Activated CD4-positive, alpha-beta memory T cell treated with anti-CD3 and anti-CD28 coated beads for 36 hours (primary cell): ENCODE measurements at regions of chr6 and their contacts with region 1.

Region 1: DNA sequence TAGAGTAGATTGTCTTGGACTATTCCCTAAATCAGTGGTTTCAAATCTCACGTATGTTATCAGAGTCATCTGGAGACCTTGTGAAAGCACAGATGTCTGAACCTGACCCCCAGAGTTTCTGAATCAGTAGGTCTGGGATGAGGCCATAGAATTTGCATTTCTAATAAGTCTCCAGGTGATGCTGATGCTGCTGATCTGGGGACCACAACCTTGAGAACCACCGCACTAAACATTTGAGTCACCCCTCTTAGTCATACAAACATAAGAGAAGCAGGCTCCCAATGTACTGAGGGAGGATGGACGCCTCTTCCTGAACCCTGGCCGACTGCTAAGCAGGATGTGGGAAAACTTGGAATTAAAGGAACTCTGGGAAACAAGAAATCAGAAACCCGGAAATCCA is 187.8 kb upstream of the PRDM1 start:
- DNase-seq: peak; percentile 67
- H3K4me3 Mint-ChIP-seq: no peak overlapping the region
- H3K27ac Mint-ChIP-seq: no peak overlapping the region
- H3K4me1 Mint-ChIP-seq: peaks cover 14% of the 10 kb centered on the region
- H3K27me3 Mint-ChIP-seq: peaks cover 9% of the 10 kb centered on the region

Region 2: GRCh38 chr6:105484238-105485161 is 413.8 kb before region 1 on chr6:
- CTCF ChIA-PET with region 1: interaction called, 3 read pairs
- POLR2A ChIA-PET with region 1: no interaction called
- intact Hi-C with region 1: loop called (anchors 10 kb)
- DNase-seq: no peak
- H3K4me3 Mint-ChIP-seq: peak overlapping the region; percentile 2
- H3K27ac Mint-ChIP-seq: peak overlapping the region; percentile 30
- H3K4me1 Mint-ChIP-seq: peaks cover 32% of the 10 kb centered on the region
- H3K27me3 Mint-ChIP-seq: peaks cover 7% of the 10 kb centered on the region

Region 3: DNA sequence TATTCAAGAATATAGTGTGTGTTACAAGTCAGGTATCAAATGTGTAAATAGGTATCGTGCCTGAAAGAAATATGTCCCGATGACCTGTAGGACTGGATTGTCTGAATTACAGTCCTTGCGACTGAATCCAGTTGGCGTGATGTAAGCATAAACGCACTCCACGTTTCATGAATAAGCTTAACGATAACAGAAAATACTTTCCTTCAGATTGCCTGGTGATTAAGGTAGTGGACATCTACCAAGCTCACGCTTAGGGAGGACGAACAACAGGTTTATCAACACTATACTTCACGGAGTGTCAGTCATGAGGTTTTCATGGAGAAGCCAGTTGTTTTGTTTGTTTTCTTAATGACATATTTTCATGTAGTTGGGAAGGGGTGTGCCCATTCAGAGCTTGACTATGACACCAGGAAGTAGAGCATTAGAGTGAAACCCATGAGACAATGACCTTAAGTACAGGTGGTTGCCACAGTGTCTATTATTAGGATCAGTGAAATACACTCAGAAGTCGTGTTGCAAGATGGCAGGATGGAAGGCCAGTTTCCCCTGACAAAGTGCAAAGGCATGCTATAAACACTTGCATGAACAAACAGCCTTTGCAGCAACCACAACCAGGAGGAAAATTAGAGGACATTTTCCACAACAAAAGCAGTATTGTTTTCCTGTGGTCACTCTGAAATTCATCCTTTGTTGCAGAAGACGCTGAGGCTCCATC is 118.0 kb before region 1 on chr6:
- CTCF ChIA-PET with region 1: no interaction called
- POLR2A ChIA-PET with region 1: no interaction called
- intact Hi-C with region 1: loop called (anchors 1 kb)
- DNase-seq: no peak
- H3K4me3 Mint-ChIP-seq: no peak overlapping the region
- H3K27ac Mint-ChIP-seq: no peak overlapping the region
- H3K4me1 Mint-ChIP-seq: peaks cover 19% of the 10 kb centered on the region
- H3K27me3 Mint-ChIP-seq: no peaks in the 10 kb centered on the region

Region 4: GRCh38 chr6:105872246-105872645 is 26.0 kb before region 1 on chr6:
- CTCF ChIA-PET with region 1: no interaction called
- POLR2A ChIA-PET with region 1: no interaction called
- intact Hi-C with region 1: loop called (anchors 1 kb)
- DNase-seq: no peak
- H3K4me3 Mint-ChIP-seq: no peak overlapping the region
- H3K27ac Mint-ChIP-seq: no peak overlapping the region
- H3K4me1 Mint-ChIP-seq: peaks cover 12% of the 10 kb centered on the region
- H3K27me3 Mint-ChIP-seq: peaks cover 26% of the 10 kb centered on the region

Region 5: GRCh38 chr6:105920071-105920470 is 21.8 kb after region 1 on chr6:
- CTCF ChIA-PET with region 1: no interaction called
- POLR2A ChIA-PET with region 1: interaction called, 4 read pairs
- intact Hi-C with region 1: loop called (anchors 1 kb)
- DNase-seq: peak; percentile 50
- H3K4me3 Mint-ChIP-seq: no peak overlapping the region
- H3K27ac Mint-ChIP-seq: peak overlapping the region; percentile 74
- H3K4me1 Mint-ChIP-seq: peaks cover 13% of the 10 kb centered on the region
- H3K27me3 Mint-ChIP-seq: peaks cover 7% of the 10 kb centered on the region

Region 6: GRCh38 chr6:106114492-106115265 is 216.4 kb after region 1 on chr6:
- CTCF ChIA-PET with region 1: no interaction called
- POLR2A ChIA-PET with region 1: no interaction called
- intact Hi-C with region 1: loop called (anchors 1 kb)
- DNase-seq: peak; percentile 92
- H3K4me3 Mint-ChIP-seq: peak overlapping the region; percentile 25
- H3K27ac Mint-ChIP-seq: peak overlapping the region; percentile 75
- H3K4me1 Mint-ChIP-seq: peaks cover 92% of the 10 kb centered on the region
- H3K27me3 Mint-ChIP-seq: peaks cover 8% of the 10 kb centered on the region

Region 7: DNA sequence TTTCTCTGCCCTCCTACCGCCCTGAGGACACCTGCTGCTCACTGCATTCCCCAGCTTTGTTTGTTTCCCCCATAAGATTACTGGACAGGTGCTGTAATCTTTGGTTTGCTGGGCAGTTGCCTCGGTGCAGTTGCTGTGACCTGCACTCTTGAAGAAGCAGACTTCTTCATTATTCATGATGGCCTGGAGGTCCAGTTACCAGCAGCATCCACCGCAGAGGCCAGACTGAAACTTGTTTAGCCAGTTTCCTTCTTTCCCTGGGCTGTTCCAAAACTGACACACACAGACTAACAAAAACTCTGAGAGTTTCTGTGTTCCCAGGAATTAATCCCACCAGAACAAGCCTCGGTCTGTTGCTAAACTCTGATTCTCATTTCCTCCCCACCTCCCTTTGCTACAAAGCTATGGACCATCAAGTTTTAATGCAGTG is 875.2 kb after region 1 on chr6:
- CTCF ChIA-PET with region 1: no interaction called
- POLR2A ChIA-PET with region 1: no interaction called
- intact Hi-C with region 1: no loop called
- DNase-seq: no peak
- H3K4me3 Mint-ChIP-seq: no peak overlapping the region
- H3K27ac Mint-ChIP-seq: no peak overlapping the region
- H3K4me1 Mint-ChIP-seq: no peaks in the 10 kb centered on the region
- H3K27me3 Mint-ChIP-seq: peaks cover 11% of the 10 kb centered on the region